Heart left ventricle (tissue), 16 donors: ENCODE measurements at regions of chr2 and their contacts with region 1.

Region 1: GRCh38 chr2:206881708-206882410 is 57.5 kb upstream of the CPO start:
- DNase-seq: peak in 1 of 5 donors; percentile 25
- ATAC-seq: peak in 3 of 4 donors; percentile 48 to 78 (median 63)
- H3K4me3 ChIP-seq: peak overlapping the region in 7 of 12 donors; percentile 3 to 18 (median 15)
- H3K27ac ChIP-seq: peak overlapping the region in 4 of 12 donors; percentile 18 to 49 (median 34)
- H3K4me1 ChIP-seq: peaks cover 0 to 17% (median 3%) of the 10 kb centered on the region in 12 donors
- H3K27me3 ChIP-seq: no peaks in the 10 kb centered on the region
- CTCF ChIP-seq: no peak
- POLR2A ChIP-seq: no peak

Region 2: GRCh38 chr2:206955253-206955652 is 73.4 kb after region 1 on chr2:
- intact Hi-C with region 1: loop called in 1 of 10 experiments (anchors 10 kb)
- DNase-seq: no peak
- ATAC-seq: no peak
- H3K4me3 ChIP-seq: no peak overlapping the region
- H3K27ac ChIP-seq: no peak overlapping the region
- H3K4me1 ChIP-seq: no peaks in the 10 kb centered on the region
- H3K27me3 ChIP-seq: no peaks in the 10 kb centered on the region
- CTCF ChIP-seq: no peak
- POLR2A ChIP-seq: no peak